Sciatic nerve (tissue), 2 donors: ENCODE measurements at regions of chr22 and their contacts with region 1.

Region 1: DNA sequence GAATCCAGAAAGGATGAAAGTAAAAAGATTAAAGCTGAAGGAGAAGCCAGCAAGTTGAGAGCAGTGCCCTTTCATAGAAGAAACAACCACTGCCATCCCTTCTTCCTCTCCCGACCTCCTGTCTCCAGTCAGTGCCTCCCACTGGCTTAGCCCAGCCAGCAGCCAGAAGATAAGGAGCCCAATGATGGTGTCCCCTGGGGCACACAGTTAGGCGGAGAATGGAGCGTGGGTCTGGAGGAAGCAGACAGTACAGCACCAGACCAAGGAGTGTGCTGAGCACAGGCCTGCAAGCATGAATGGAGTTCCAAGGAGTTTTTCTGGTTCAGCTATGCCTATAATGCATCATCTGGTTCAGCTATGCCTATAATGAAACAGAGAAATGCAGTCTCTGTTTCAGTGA is 54.3 kb upstream of the TNRC6B start:
- DNase-seq: no peak
- ATAC-seq: peak; percentile 64

Region 2: DNA sequence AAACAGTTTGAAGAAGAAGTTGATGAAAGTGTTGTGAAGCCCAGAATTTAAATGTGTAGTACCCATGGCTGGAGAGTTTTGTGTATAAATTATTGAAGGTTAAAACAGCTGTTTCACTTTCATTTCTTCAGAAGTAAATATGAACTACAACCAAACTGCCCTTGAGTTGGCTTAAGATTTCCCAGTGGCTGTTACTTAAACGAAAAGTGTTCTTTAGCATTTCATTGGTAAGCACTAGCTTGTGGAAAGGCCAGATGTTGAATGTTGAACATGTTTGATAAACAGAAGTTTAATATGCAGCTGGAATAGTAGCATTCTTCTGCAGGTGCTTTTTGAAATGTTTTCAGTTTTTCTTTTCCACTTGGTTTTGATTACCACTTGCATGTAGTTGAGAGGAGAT is 28.9 kb before region 1 on chr22:
- intact Hi-C with region 1: no loop called
- DNase-seq: no peak
- ATAC-seq: no peak

Region 3: GRCh38 chr22:40107851-40108378 is 15.5 kb before region 1 on chr22:
- intact Hi-C with region 1: loop called (anchors 2 kb)
- DNase-seq: no peak
- ATAC-seq: no peak

Region 4: DNA sequence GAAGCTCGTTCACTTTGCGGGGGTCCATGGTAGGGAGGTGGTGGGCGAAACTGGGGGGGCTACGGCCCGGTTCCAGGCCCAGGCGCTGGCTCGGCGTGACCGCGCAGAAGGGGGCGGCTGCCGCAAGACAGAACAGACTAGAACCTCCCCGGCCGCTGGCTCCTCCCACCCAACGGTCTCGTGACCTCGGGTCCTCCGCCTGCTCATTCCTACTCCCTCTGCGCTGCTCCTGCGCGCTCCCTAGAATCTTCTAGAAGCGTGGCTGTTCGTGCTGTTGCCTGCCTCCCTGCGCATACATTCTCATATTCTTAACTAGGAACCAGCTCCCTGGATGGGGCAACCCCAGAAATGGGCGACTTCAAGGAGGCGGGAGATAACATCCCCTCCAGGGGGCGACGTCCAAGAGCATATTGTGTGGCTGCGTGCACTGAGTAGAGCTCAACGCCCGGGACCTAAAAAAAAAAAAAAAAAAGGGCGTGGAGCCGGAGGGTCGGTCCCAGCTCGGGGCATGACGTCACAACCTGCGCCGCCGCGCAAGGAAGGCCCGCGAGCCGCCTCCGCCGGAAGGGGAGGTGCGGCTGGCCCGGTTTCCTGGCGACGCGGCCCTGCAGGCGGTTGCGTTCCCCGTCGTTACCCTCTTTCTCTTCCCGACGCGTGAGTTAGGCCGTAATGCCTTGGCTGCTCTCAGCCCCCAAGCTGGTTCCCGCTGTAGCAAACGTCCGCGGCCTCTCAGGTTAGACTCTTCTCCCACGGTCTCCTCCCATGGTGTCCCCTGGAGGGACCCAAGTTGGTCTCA is 733.3 kb after region 1 on chr22 and contains the starts of genes ST13 and XPNPEP3:
- intact Hi-C with region 1: no loop called
- DNase-seq: peak; percentile 99
- ATAC-seq: peak; percentile 99
- total RNA-seq, gene ST13: 238 TPM
- total RNA-seq, gene XPNPEP3: 19.2 TPM